ENCODE measurements at regions of chr12 and their contacts with region 1.

Region 1: DNA sequence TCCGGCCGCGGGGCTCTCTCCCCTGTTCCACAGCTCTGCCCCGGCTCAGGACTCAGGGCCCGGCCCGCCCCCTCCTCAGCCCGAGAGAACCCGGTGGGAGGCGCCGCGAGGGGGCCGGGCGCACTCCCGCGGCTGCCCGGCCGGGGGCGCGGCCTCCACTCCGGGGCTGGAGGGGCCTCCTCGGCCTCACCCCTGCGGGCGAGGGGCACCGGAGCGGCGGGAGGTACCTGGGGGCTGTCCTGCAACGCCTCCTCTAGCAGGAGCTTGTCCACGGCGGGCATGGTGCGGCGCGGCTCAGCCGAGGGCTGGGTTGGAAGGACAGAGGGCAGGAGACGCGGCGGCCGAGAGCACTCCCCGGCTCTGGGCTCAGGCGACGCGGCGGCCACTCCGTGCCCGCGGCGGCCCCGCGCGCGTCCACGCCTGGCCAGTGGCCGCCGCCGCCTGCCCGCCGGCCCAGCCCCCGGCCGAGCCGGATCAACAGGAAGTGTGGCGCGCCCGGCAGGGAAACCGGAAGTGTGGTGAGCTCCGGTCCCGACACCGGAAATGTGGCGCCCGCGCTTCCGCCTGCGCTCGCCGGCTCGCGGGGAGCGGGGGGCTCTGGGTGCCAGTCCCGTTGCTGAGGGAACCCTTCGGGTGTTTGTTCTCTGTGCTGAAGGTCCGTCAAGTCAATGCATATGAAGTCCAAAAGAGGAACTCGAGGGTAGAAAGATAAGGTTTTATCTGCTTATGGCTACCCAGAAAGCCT is at the start of gene APPL2:
- DNase-seq: peak; percentile 61 to 73 (median 69)
- H3K4me3 ChIP-seq: peak within 1 kb of the TSS; percentile 63 to 74
- H3K4me3 Mint-ChIP-seq: peak within 1 kb of the TSS; percentile 90 to 97 (median 94)
- H3K27ac ChIP-seq: peak within 1 kb of the TSS; percentile 56
- H3K27ac Mint-ChIP-seq: peak within 1 kb of the TSS; percentile 90 to 98 (median 92)
- H3K4me1 ChIP-seq: peaks cover 39% of the 10 kb centered on the region
- H3K4me1 Mint-ChIP-seq: peaks cover 32 to 45% (median 38%) of the 10 kb centered on the region in 4 donors
- H3K27me3 ChIP-seq: no peaks in the 10 kb centered on the region
- H3K27me3 Mint-ChIP-seq: no peaks in the 10 kb centered on the region
- total RNA-seq, gene APPL2: 56.0 to 61.0 TPM

Region 2: GRCh38 chr12:105156260-105156659 is 79.6 kb before region 1 on chr12:
- CTCF ChIA-PET with region 1: no interaction called
- POLR2A ChIA-PET with region 1: no interaction called
- intact Hi-C with region 1: no loop called
- DNase-seq: no peak
- H3K4me3 ChIP-seq: no peak overlapping the region
- H3K4me3 Mint-ChIP-seq: no peak overlapping the region
- H3K27ac ChIP-seq: no peak overlapping the region
- H3K27ac Mint-ChIP-seq: peak overlapping the region in 2 of 7 donors; percentile 16 to 58
- H3K4me1 ChIP-seq: no peaks in the 10 kb centered on the region
- H3K4me1 Mint-ChIP-seq: peaks cover 0 to 8% (median 2%) of the 10 kb centered on the region in 4 donors
- H3K27me3 ChIP-seq: no peaks in the 10 kb centered on the region
- H3K27me3 Mint-ChIP-seq: no peaks in the 10 kb centered on the region

Region 3: DNA sequence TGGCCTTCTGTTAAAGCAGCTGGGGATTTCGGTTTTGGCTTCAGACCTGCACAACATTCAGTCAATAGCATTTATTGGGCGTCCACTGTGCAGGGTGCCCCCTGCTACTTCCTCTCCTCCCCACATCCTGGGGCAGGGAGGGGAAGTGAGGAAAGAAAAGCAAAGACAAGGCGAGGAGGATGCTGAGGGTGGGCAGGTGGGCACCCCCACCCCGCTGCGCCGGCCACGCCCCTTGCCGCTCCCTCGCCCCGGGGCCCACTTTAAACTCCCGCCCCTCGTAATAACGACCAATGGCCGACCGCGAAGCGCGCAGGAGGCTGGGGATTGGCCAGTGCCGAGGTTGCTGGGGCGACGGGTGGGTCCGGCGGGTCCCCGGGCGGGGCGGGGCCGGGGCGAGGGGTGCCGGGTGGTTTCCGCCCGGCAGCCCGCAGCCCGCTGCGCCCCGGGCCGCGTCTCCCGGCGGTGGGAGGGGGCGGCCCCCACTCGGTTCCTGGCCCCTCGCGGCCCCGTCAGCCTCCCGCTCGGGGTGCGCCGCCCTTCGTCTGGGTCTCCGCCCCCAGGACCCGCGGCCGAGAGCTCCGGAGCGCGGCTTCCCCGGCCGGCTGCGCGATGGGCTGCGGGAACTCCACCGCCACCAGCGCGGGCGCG is 94.5 kb after region 1 on chr12 and contains the start of gene C12orf75:
- CTCF ChIA-PET with region 1: no interaction called
- POLR2A ChIA-PET with region 1: interaction called, 35 read pairs
- intact Hi-C with region 1: loop called (anchors 2 kb)
- DNase-seq: peak; percentile 75 to 89 (median 85)
- H3K4me3 ChIP-seq: peak within 1 kb of the TSS; percentile 43 to 49
- H3K4me3 Mint-ChIP-seq: peak within 1 kb of the TSS; percentile 84 to 97 (median 89)
- H3K27ac ChIP-seq: peak within 1 kb of the TSS; percentile 72
- H3K27ac Mint-ChIP-seq: peak within 1 kb of the TSS; percentile 89 to 97 (median 90)
- H3K4me1 ChIP-seq: peaks cover 47% of the 10 kb centered on the region
- H3K4me1 Mint-ChIP-seq: peaks cover 17 to 71% (median 36%) of the 10 kb centered on the region in 4 donors
- H3K27me3 ChIP-seq: no peaks in the 10 kb centered on the region
- H3K27me3 Mint-ChIP-seq: no peaks in the 10 kb centered on the region
- total RNA-seq, gene C12orf75: 12.1 to 14.6 TPM

Measured in CD4-positive, alpha-beta memory T cell (primary cell).